CD8-positive, alpha-beta T cell (primary cell): ENCODE measurements at regions of chr17 and their contacts with region 1.

Region 1: GRCh38 chr17:2244545-2245525 is 58.8 kb downstream of the SMG6 start:
- DNase-seq: peak; percentile 72 to 90 (median 86)
- ATAC-seq: peak; percentile 91
- H3K4me3 ChIP-seq: no peak overlapping the region
- H3K4me3 Mint-ChIP-seq: no peak overlapping the region
- H3K27ac ChIP-seq: peak overlapping the region in 1 of 2 experiments; percentile 23
- H3K27ac Mint-ChIP-seq: peak overlapping the region; percentile 78
- H3K4me1 ChIP-seq: peaks cover 11% of the 10 kb centered on the region
- H3K4me1 Mint-ChIP-seq: peaks cover 32% of the 10 kb centered on the region
- H3K27me3 ChIP-seq: no peaks in the 10 kb centered on the region
- H3K27me3 Mint-ChIP-seq: no peaks in the 10 kb centered on the region
- CTCF ChIP-seq: peak; percentile 94

Region 2: DNA sequence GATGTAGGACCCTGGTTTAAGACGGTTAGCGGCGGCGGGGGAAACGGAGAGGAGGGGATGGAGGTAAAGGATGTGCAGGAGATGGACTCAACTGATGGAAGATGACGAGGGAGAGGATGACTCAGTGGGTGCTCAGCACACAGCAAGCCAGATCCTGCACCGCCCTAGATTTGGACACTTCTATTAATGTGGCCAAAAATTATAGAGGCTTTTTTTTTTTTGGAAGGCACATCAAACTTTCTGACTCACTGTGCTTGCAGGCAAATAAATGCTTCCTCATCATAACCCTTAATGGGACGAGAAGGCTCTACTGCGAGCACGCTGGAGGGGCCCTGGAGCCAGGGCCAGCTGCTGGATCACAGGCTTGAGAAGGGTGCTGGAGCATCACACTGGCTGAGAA is 255.7 kb before region 1 on chr17:
- CTCF ChIA-PET with region 1: no interaction called
- POLR2A ChIA-PET with region 1: no interaction called
- intact Hi-C with region 1: no loop called
- DNase-seq: no peak
- ATAC-seq: no peak
- H3K4me3 ChIP-seq: no peak overlapping the region
- H3K4me3 Mint-ChIP-seq: no peak overlapping the region
- H3K27ac ChIP-seq: no peak overlapping the region
- H3K27ac Mint-ChIP-seq: no peak overlapping the region
- H3K4me1 ChIP-seq: no peaks in the 10 kb centered on the region
- H3K4me1 Mint-ChIP-seq: no peaks in the 10 kb centered on the region
- H3K27me3 ChIP-seq: no peaks in the 10 kb centered on the region
- H3K27me3 Mint-ChIP-seq: peaks cover 2% of the 10 kb centered on the region
- CTCF ChIP-seq: no peak

Region 3: DNA sequence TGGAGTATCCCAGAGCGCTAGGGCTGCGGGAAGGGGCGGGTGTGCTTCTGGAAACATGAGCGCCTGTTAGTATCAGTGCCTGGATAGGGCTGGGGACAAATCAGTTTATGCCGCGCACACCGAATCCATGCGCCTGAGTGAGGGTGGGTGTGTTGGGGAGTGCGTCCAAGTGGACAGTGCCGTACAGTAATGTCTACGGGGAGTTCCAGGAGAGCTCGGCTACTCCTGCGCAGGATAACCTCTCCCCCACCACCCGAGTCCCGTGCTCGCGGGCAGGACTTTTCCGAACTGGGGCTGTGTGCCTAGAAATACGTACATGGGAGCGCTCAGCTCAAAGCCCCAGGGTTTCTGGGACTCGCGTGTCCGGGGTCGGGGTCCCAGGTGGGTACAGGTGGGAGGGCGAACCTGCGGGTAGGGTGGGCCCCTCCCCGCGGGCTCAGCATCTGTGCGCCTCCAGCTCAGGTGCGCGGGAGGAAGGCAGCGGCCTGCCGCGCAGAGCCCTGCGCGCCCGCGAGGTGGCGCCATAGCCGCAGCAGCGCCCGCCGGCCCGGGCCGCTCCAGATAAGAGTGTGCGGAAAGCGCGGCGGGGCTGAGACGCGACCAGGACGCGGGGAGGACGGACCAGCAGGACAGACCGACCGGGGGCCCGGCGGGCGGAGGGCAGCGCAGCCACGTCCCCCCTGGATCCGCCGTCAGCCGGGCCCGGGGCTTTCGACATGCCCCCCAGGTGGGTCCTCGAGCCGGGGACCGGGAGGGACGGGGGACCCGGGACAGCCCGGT is 190.1 kb before region 1 on chr17 and contains the start of gene HIC1:
- CTCF ChIA-PET with region 1: interaction called, 240 read pairs
- POLR2A ChIA-PET with region 1: interaction called, 18 read pairs
- intact Hi-C with region 1: loop called (anchors 1 kb)
- DNase-seq: peak; percentile 64 to 88 (median 73)
- ATAC-seq: peak; percentile 45
- H3K4me3 ChIP-seq: peak within 1 kb of the TSS; percentile 48 to 65
- H3K4me3 Mint-ChIP-seq: peak within 1 kb of the TSS; percentile 78
- H3K27ac ChIP-seq: peak within 1 kb of the TSS; percentile 56 to 74
- H3K27ac Mint-ChIP-seq: peak within 1 kb of the TSS; percentile 81
- H3K4me1 ChIP-seq: peaks cover 64% of the 10 kb centered on the region
- H3K4me1 Mint-ChIP-seq: peaks cover 31% of the 10 kb centered on the region
- H3K27me3 ChIP-seq: peaks cover 0 to 2% of the 10 kb centered on the region in 2 experiments
- H3K27me3 Mint-ChIP-seq: peaks cover 13% of the 10 kb centered on the region
- CTCF ChIP-seq: peak; percentile 85
- total RNA-seq, gene HIC1: 12.1 to 13.0 TPM

Region 4: GRCh38 chr17:2137342-2138098 is 107.3 kb before region 1 on chr17:
- CTCF ChIA-PET with region 1: interaction called, 12 read pairs
- POLR2A ChIA-PET with region 1: no interaction called
- intact Hi-C with region 1: no loop called
- DNase-seq: peak in 1 of 9 experiments; percentile 22
- ATAC-seq: no peak
- H3K4me3 ChIP-seq: no peak overlapping the region
- H3K4me3 Mint-ChIP-seq: no peak overlapping the region
- H3K27ac ChIP-seq: no peak overlapping the region
- H3K27ac Mint-ChIP-seq: no peak overlapping the region
- H3K4me1 ChIP-seq: peaks cover 13% of the 10 kb centered on the region
- H3K4me1 Mint-ChIP-seq: peaks cover 15% of the 10 kb centered on the region
- H3K27me3 ChIP-seq: no peaks in the 10 kb centered on the region
- H3K27me3 Mint-ChIP-seq: no peaks in the 10 kb centered on the region
- CTCF ChIP-seq: no peak

Region 5: DNA sequence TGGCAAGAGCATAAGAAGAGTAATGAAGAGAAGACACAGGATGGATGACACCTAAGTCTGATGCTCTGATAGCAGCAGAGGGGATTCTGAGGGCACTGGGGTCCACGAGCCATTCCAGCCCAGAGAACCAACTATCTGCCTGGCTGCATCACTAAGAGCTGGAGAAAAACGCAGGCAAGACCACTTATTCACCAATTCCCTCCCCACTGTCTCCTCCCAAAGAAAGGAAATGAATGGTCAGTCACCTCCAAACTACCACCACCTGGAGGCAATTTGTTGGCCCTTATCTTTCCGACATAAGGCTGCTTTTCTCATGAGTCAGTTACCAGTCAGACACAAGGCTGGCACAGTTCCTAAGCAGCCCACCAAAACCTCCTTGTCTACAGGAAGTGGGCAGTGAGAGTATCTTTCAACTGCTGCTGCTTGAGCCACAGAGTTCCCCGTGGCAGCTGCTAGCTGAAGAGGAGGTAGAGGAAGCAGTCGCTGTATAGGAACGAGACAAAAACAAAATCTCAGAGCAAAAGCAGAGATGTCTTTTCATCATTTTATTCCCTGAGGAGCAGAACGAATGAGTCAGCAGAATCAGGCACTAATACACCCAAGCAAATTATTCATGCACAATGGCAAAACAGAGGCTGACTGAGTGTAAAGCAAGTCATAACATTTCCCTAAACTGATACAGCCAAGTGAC is 52.3 kb before region 1 on chr17:
- CTCF ChIA-PET with region 1: interaction called, 17 read pairs
- POLR2A ChIA-PET with region 1: no interaction called
- intact Hi-C with region 1: loop called (anchors 1 to 2 kb)
- DNase-seq: peak; percentile 24 to 89 (median 74)
- ATAC-seq: peak; percentile 90
- H3K4me3 ChIP-seq: no peak overlapping the region
- H3K4me3 Mint-ChIP-seq: peak overlapping the region; percentile 62
- H3K27ac ChIP-seq: peak overlapping the region in 1 of 2 experiments; percentile 33
- H3K27ac Mint-ChIP-seq: peak overlapping the region; percentile 87
- H3K4me1 ChIP-seq: peaks cover 48% of the 10 kb centered on the region
- H3K4me1 Mint-ChIP-seq: peaks cover 63% of the 10 kb centered on the region
- H3K27me3 ChIP-seq: no peaks in the 10 kb centered on the region
- H3K27me3 Mint-ChIP-seq: no peaks in the 10 kb centered on the region
- CTCF ChIP-seq: no peak

Region 6: DNA sequence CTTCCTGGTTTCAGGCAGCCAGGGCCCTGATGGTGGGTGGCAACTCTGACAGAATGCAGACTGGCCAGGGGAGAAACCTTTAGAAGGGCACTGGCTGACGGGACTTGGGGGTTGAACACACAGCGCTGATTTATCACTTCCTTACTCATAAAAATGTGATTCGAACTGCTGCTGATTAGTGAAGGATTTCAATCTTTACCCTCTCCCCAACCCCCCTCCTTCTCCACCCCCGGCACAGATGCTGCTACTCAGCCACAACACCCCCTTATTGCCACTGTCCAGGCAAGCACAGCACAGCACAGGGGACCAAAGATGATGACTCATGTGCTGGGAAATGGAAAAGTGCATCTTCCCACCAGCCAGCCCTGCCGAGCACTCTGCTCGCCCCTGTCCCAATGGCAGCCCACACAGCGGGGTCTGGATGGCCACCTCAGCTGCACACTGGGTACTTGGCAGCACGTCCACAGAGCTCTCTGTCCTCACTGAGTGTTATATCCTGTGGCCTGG is 11.3 kb before region 1 on chr17:
- CTCF ChIA-PET with region 1: interaction called, 41 read pairs
- POLR2A ChIA-PET with region 1: no interaction called
- intact Hi-C with region 1: no loop called
- DNase-seq: no peak
- ATAC-seq: no peak
- H3K4me3 ChIP-seq: no peak overlapping the region
- H3K4me3 Mint-ChIP-seq: no peak overlapping the region
- H3K27ac ChIP-seq: no peak overlapping the region
- H3K27ac Mint-ChIP-seq: no peak overlapping the region
- H3K4me1 ChIP-seq: no peaks in the 10 kb centered on the region
- H3K4me1 Mint-ChIP-seq: peaks cover 23% of the 10 kb centered on the region
- H3K27me3 ChIP-seq: no peaks in the 10 kb centered on the region
- H3K27me3 Mint-ChIP-seq: no peaks in the 10 kb centered on the region
- CTCF ChIP-seq: no peak

Region 7: DNA sequence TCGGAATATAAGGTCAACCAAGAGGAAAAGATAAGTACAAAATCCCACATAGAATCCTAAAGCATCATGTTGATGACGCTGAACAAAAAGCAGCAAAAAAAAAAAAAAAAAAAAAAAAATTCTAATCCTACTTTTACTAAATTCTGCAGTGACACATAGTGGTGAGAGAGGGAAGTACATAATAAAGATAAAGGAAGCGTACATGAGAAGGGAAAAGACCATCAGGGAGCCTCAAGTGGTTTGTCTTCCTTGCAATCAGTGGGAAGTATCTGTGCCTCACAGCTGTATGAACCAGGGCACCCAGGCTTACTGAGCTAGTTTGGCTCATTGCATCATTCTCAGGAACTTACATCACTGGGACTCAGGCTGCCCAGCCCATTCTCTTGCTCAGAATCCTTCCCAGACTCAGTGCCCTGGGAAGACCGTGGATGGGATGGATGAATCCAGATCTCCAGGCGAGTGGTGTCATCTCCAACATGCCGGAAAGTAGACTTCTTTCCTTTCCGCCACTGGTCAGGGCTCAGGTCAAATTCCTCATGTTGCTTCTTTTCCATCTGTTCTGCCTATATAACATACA is 37.5 kb after region 1 on chr17:
- CTCF ChIA-PET with region 1: interaction called, 91 read pairs
- POLR2A ChIA-PET with region 1: no interaction called
- intact Hi-C with region 1: loop called (anchors 1 kb)
- DNase-seq: peak in 2 of 9 experiments; percentile 71 to 81
- ATAC-seq: peak; percentile 77
- H3K4me3 ChIP-seq: no peak overlapping the region
- H3K4me3 Mint-ChIP-seq: no peak overlapping the region
- H3K27ac ChIP-seq: no peak overlapping the region
- H3K27ac Mint-ChIP-seq: peak overlapping the region; percentile 53
- H3K4me1 ChIP-seq: peaks cover 9% of the 10 kb centered on the region
- H3K4me1 Mint-ChIP-seq: peaks cover 21% of the 10 kb centered on the region
- H3K27me3 ChIP-seq: no peaks in the 10 kb centered on the region
- H3K27me3 Mint-ChIP-seq: no peaks in the 10 kb centered on the region
- CTCF ChIP-seq: peak; percentile 84